Right ventricle myocardium inferior (tissue), 1 donor: ENCODE measurements at regions of chr1 and their contacts with region 1.

Region 1: GRCh38 chr1:119743781-119744597 is 24.7 kb downstream of the HMGCS2 start:
- DNase-seq: no peak
- ATAC-seq: peak; percentile 49

Region 2: GRCh38 chr1:119808972-119809550 is 65.1 kb after region 1 on chr1:
- intact Hi-C with region 1: loop called (anchors 2 kb)
- DNase-seq: peak; percentile 85
- ATAC-seq: peak; percentile 72

Region 3: GRCh38 chr1:119885903-119886783 is 142.2 kb after region 1 on chr1:
- intact Hi-C with region 1: no loop called
- DNase-seq: peak; percentile 77
- ATAC-seq: peak; percentile 60